SK-N-SH (cell line): ENCODE measurements at regions of chr7 and their contacts with region 1.

Region 1: GRCh38 chr7:137656227-137656849 is 190.4 kb downstream of the DGKI start:
- DNase-seq: peak; percentile 74
- H3K4me3 ChIP-seq: peak overlapping the region in 1 of 2 experiments; percentile 20; a peak in 1 of 4 replicates
- H3K27ac ChIP-seq: peak overlapping the region; percentile 55 to 92
- H3K4me1 ChIP-seq: peaks cover 26 to 27% of the 10 kb centered on the region in 2 experiments
- H3K27me3 ChIP-seq: no peaks in the 10 kb centered on the region
- CTCF ChIP-seq: peak; percentile 99
- EP300 ChIP-seq: no peak
- RAD21 ChIP-seq: peak; percentile 99

Region 2: GRCh38 chr7:137606061-137606674 is 50.2 kb before region 1 on chr7:
- CTCF ChIA-PET with region 1: interaction called, 44 read pairs
- POLR2A ChIA-PET with region 1: no interaction called
- DNase-seq: no peak
- H3K4me3 ChIP-seq: no peak overlapping the region; a peak in 1 of 4 replicates
- H3K27ac ChIP-seq: no peak overlapping the region
- H3K4me1 ChIP-seq: no peaks in the 10 kb centered on the region; a peak in 1 of 4 replicates
- H3K27me3 ChIP-seq: no peaks in the 10 kb centered on the region
- CTCF ChIP-seq: peak; percentile 91
- EP300 ChIP-seq: no peak
- RAD21 ChIP-seq: peak; percentile 64

Region 3: GRCh38 chr7:137642472-137642871 is 13.9 kb before region 1 on chr7:
- CTCF ChIA-PET with region 1: interaction called, 22 read pairs
- POLR2A ChIA-PET with region 1: no interaction called
- DNase-seq: no peak
- H3K4me3 ChIP-seq: no peak overlapping the region
- H3K27ac ChIP-seq: no peak overlapping the region
- H3K4me1 ChIP-seq: no peaks in the 10 kb centered on the region
- H3K27me3 ChIP-seq: no peaks in the 10 kb centered on the region
- CTCF ChIP-seq: no peak
- EP300 ChIP-seq: no peak
- RAD21 ChIP-seq: no peak

Region 4: GRCh38 chr7:137687556-137688280 is 31.4 kb after region 1 on chr7:
- CTCF ChIA-PET with region 1: interaction called, 23 read pairs
- POLR2A ChIA-PET with region 1: no interaction called
- DNase-seq: no peak
- H3K4me3 ChIP-seq: no peak overlapping the region
- H3K27ac ChIP-seq: peak overlapping the region in 1 of 2 experiments; percentile 81; a peak in 2 of 4 replicates
- H3K4me1 ChIP-seq: peaks cover 24 to 34% of the 10 kb centered on the region in 2 experiments; a peak in 3 of 4 replicates
- H3K27me3 ChIP-seq: no peaks in the 10 kb centered on the region
- CTCF ChIP-seq: no peak
- EP300 ChIP-seq: peak in 1 of 2 experiments; percentile 65; a peak in 2 of 4 replicates
- RAD21 ChIP-seq: no peak

Region 5: DNA sequence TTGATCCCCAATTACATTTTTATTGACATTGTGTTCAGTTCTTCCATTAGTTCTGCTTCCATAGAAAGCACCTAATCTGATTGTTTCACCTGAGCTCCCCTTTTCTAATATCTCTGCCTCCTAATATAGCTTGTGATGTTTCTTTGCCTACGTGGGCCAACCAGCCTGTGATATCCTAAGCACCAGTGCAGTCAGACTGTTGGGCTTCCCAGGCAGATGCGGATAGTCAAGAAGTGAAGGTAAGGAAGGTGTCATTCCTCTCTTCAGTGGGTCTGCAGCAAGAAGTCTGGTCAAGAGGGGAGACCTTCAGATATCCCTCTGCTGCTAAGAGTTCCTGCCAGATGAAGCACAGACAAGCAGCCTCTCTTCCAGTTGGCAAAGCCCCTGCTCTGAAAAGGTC is 206.6 kb after region 1 on chr7:
- CTCF ChIA-PET with region 1: interaction called, 10 read pairs
- POLR2A ChIA-PET with region 1: no interaction called
- DNase-seq: no peak
- H3K4me3 ChIP-seq: no peak overlapping the region
- H3K27ac ChIP-seq: no peak overlapping the region
- H3K4me1 ChIP-seq: no peaks in the 10 kb centered on the region
- H3K27me3 ChIP-seq: no peaks in the 10 kb centered on the region
- CTCF ChIP-seq: no peak
- EP300 ChIP-seq: no peak
- RAD21 ChIP-seq: no peak

Region 6: GRCh38 chr7:137898839-137899721 is 242.7 kb after region 1 on chr7:
- CTCF ChIA-PET with region 1: interaction called, 178 read pairs
- POLR2A ChIA-PET with region 1: no interaction called
- DNase-seq: peak; percentile 89
- H3K4me3 ChIP-seq: no peak overlapping the region; a peak in 1 of 4 replicates
- H3K27ac ChIP-seq: peak overlapping the region; percentile 17 to 36; a peak in 3 of 4 replicates
- H3K4me1 ChIP-seq: peaks cover 0 to 8% of the 10 kb centered on the region in 2 experiments; a peak in 1 of 4 replicates
- H3K27me3 ChIP-seq: no peaks in the 10 kb centered on the region
- CTCF ChIP-seq: peak; percentile 99
- EP300 ChIP-seq: no peak
- RAD21 ChIP-seq: peak; percentile 98

Region 7: GRCh38 chr7:138008547-138009349 is 352.4 kb after region 1 on chr7:
- CTCF ChIA-PET with region 1: interaction called, 29 read pairs
- POLR2A ChIA-PET with region 1: no interaction called
- DNase-seq: peak; percentile 63
- H3K4me3 ChIP-seq: no peak overlapping the region; a peak in 1 of 4 replicates
- H3K27ac ChIP-seq: no peak overlapping the region
- H3K4me1 ChIP-seq: no peaks in the 10 kb centered on the region; a peak in 1 of 4 replicates
- H3K27me3 ChIP-seq: no peaks in the 10 kb centered on the region
- CTCF ChIP-seq: peak; percentile 99
- EP300 ChIP-seq: no peak
- RAD21 ChIP-seq: peak; percentile 98